ENCODE measurements at regions of chr14 and their contacts with region 1.

Region 1: GRCh38 chr14:55136885-55137786 is 8.1 kb downstream of the LGALS3 start:
- DNase-seq: peak; percentile 87 to 93 (median 90)
- ATAC-seq: peak; percentile 87 to 96 (median 90)
- H3K4me3 ChIP-seq: peak overlapping the region in 11 of 12 donors; percentile 0 to 48 (median 15)
- H3K27ac ChIP-seq: peak overlapping the region; percentile 38 to 86 (median 76)
- H3K4me1 ChIP-seq: peaks cover 6 to 73% (median 63%) of the 10 kb centered on the region in 12 donors
- H3K27me3 ChIP-seq: no peaks in the 10 kb centered on the region
- CTCF ChIP-seq: peak in 4 of 12 donors; percentile 12 to 36 (median 15)
- POLR2A ChIP-seq: no peak

Region 2: GRCh38 chr14:55051426-55052268 is 85.5 kb before region 1 on chr14 and contains the start of gene MAPK1IP1L:
- intact Hi-C with region 1: loop called in 2 of 10 experiments (anchors 5 kb)
- DNase-seq: peak; percentile 92 to 97 (median 94)
- ATAC-seq: peak; percentile 89 to 98 (median 97)
- H3K4me3 ChIP-seq: peak within 1 kb of the TSS; percentile 74 to 99 (median 92)
- H3K27ac ChIP-seq: peak within 1 kb of the TSS; percentile 97 to 100 (median 100)
- H3K4me1 ChIP-seq: peaks cover 0 to 46% (median 32%) of the 10 kb centered on the region in 12 donors
- H3K27me3 ChIP-seq: no peaks in the 10 kb centered on the region
- CTCF ChIP-seq: peak; percentile 99 to 100 (median 100)
- POLR2A ChIP-seq: peak; percentile 80 to 93
- total RNA-seq, gene MAPK1IP1L: 58.9 to 159 (median 80.1) TPM

Region 3: GRCh38 chr14:55088356-55088755 is 48.8 kb before region 1 on chr14:
- intact Hi-C with region 1: loop called in 9 of 10 experiments (anchors 1 to 5 kb)
- DNase-seq: no peak
- ATAC-seq: peak in 1 of 4 donors; percentile 46
- H3K4me3 ChIP-seq: no peak overlapping the region
- H3K27ac ChIP-seq: no peak overlapping the region
- H3K4me1 ChIP-seq: peaks cover 0 to 20% (median 0%) of the 10 kb centered on the region in 12 donors
- H3K27me3 ChIP-seq: no peaks in the 10 kb centered on the region
- CTCF ChIP-seq: no peak
- POLR2A ChIP-seq: no peak

Region 4: DNA sequence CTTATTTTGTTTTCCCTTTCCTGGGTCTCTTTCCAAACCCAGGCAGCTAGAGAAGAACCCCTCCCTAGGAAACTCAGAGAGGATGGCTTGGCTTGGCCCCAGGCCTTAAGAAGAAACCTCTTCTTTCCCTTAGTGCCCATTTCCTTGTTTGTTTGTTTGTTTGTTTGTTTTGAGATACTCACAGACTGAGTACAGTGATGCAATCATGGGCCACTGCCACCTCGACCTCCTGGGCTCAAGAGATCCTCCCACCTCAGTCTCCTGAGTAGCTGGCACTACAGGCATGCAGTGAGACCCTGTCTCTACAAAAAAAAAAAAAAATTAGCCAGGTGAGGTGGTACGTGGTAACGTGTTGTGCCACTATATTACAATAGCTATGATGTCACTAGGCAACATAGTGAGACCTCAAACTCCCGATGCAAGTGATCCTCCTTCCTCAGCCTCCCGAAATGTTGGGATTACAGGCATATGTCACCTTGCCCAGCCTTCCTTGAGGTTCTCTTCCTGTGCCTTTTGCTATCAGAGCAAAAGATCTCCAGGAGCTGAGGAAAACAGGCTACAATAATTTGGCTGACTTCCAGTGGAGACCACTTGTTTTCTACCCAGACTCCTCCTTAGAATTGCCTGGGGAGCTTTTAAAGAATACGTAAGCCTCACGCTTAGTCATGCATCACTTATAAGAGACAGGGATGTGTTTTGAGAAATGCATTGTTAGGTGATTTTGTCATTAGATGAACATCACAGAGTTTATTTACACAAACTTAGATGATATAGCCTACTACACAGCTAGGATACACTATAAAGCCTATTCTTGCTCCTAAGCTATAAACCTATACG is 42.6 kb before region 1 on chr14:
- intact Hi-C with region 1: loop called in 9 of 10 experiments (anchors 1 to 5 kb)
- DNase-seq: no peak
- ATAC-seq: no peak
- H3K4me3 ChIP-seq: no peak overlapping the region
- H3K27ac ChIP-seq: no peak overlapping the region
- H3K4me1 ChIP-seq: peaks cover 0 to 37% (median 12%) of the 10 kb centered on the region in 12 donors
- H3K27me3 ChIP-seq: no peaks in the 10 kb centered on the region
- CTCF ChIP-seq: no peak
- POLR2A ChIP-seq: no peak

Measured in heart left ventricle (tissue), 16 donors.